CD8-positive, alpha-beta T cell (primary cell): ENCODE measurements at regions of chr1 and their contacts with region 1.

Region 1: GRCh38 chr1:229258031-229258756 is 12.7 kb upstream of the RAB4A start:
- DNase-seq: peak; percentile 24 to 82 (median 67)
- ATAC-seq: peak; percentile 25
- H3K4me3 ChIP-seq: no peak overlapping the region
- H3K4me3 Mint-ChIP-seq: peak overlapping the region; percentile 4
- H3K27ac ChIP-seq: peak overlapping the region in 1 of 2 experiments; percentile 33
- H3K27ac Mint-ChIP-seq: peak overlapping the region; percentile 80
- H3K4me1 ChIP-seq: peaks cover 25% of the 10 kb centered on the region
- H3K4me1 Mint-ChIP-seq: peaks cover 27% of the 10 kb centered on the region
- H3K27me3 ChIP-seq: no peaks in the 10 kb centered on the region
- H3K27me3 Mint-ChIP-seq: no peaks in the 10 kb centered on the region
- CTCF ChIP-seq: peak; percentile 93

Region 2: GRCh38 chr1:228664399-228664914 is 593.7 kb before region 1 on chr1:
- CTCF ChIA-PET with region 1: interaction called, 75 read pairs
- POLR2A ChIA-PET with region 1: interaction called, 5 read pairs
- intact Hi-C with region 1: loop called (anchors 1 kb)
- DNase-seq: peak; percentile 58 to 86 (median 79)
- ATAC-seq: peak; percentile 48
- H3K4me3 ChIP-seq: no peak overlapping the region
- H3K4me3 Mint-ChIP-seq: no peak overlapping the region
- H3K27ac ChIP-seq: no peak overlapping the region
- H3K27ac Mint-ChIP-seq: no peak overlapping the region
- H3K4me1 ChIP-seq: no peaks in the 10 kb centered on the region
- H3K4me1 Mint-ChIP-seq: peaks cover 3% of the 10 kb centered on the region
- H3K27me3 ChIP-seq: no peaks in the 10 kb centered on the region
- H3K27me3 Mint-ChIP-seq: no peaks in the 10 kb centered on the region
- CTCF ChIP-seq: peak; percentile 90

Region 3: GRCh38 chr1:229227298-229227919 is 30.8 kb before region 1 on chr1:
- CTCF ChIA-PET with region 1: interaction called, 103 read pairs
- POLR2A ChIA-PET with region 1: interaction called, 12 read pairs
- intact Hi-C with region 1: loop called (anchors 1 to 2 kb)
- DNase-seq: peak; percentile 68 to 92 (median 81)
- ATAC-seq: peak; percentile 75
- H3K4me3 ChIP-seq: no peak overlapping the region
- H3K4me3 Mint-ChIP-seq: no peak overlapping the region
- H3K27ac ChIP-seq: no peak overlapping the region
- H3K27ac Mint-ChIP-seq: no peak overlapping the region
- H3K4me1 ChIP-seq: no peaks in the 10 kb centered on the region
- H3K4me1 Mint-ChIP-seq: peaks cover 14% of the 10 kb centered on the region
- H3K27me3 ChIP-seq: no peaks in the 10 kb centered on the region
- H3K27me3 Mint-ChIP-seq: peaks cover 6% of the 10 kb centered on the region
- CTCF ChIP-seq: peak; percentile 94

Region 4: DNA sequence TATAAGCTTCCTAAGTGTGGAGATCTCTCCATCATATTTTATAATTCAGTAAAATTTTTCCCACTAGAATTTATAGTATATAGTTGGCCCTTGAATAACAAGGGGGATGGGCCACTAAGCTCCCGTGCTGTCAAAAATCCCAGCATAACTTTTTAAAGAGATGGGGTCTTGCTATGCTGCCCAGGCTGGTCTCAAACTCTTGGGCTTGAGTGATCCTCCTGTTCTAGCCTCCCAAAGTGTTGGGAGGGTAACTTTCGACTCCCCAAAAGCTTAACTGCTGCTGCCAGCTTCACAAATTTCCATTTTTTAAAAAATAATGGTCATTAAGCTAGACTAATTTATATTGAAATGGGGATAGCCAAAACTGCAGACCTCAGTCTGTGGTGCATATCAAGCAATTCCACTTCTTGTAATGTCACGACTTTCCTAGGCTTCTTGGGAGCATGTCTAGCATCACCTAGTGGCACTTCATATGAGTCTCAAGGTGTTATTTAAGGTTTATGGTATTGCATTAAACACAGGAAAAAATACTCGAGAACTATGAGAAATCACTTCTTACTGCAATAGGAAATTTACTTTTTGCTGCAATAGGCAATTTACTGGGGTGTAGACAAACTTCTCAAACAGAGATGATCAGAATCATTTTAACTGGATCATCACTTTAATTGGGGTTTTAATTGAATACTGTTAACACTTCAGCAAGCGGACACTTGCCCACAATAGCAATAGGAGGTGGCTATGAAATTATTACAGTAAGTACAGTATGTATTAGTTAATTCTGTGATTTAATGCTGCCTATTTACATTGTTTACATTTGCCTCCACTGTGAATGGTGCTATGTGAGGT is 195.0 kb after region 1 on chr1:
- CTCF ChIA-PET with region 1: interaction called, 17 read pairs
- POLR2A ChIA-PET with region 1: no interaction called
- intact Hi-C with region 1: loop called in 1 of 2 experiments (anchors 1 kb)
- DNase-seq: peak in 1 of 9 experiments; percentile 18
- ATAC-seq: no peak
- H3K4me3 ChIP-seq: no peak overlapping the region
- H3K4me3 Mint-ChIP-seq: no peak overlapping the region
- H3K27ac ChIP-seq: no peak overlapping the region
- H3K27ac Mint-ChIP-seq: no peak overlapping the region
- H3K4me1 ChIP-seq: no peaks in the 10 kb centered on the region
- H3K4me1 Mint-ChIP-seq: no peaks in the 10 kb centered on the region
- H3K27me3 ChIP-seq: no peaks in the 10 kb centered on the region
- H3K27me3 Mint-ChIP-seq: no peaks in the 10 kb centered on the region
- CTCF ChIP-seq: no peak

Region 5: DNA sequence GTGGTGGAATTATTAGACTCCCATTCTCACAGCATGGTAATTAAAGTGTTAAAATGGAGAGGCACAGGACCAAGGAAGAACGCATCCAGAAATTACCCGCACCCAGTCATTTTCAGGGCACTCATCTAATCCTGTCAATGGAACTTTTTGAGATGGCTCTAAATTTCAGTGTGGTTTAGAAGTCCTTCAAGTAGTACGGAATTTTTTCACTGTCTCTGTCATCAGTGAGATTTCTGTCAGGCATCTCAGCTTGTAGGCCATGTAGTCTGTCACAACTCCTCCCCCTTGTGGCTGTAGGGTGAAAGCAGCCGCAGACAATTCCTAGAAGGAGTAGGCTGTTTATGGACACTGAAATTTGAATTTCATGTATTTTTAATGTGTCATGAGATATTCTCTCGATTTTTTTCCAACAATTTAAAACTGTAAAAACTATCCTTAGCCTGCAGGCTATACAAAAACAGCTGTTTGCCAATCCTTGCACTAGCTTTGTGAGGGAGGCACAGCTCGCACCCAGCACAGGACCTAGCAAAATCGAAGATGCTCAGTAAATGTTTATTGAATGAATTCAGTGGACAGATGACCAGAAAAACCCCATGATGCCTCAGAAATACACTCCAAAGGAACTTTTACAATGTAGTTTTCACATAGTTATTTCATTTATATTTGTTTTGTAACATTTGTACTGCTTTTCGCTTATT is 256.5 kb after region 1 on chr1:
- CTCF ChIA-PET with region 1: interaction called, 38 read pairs
- POLR2A ChIA-PET with region 1: no interaction called
- intact Hi-C with region 1: loop called (anchors 1 to 10 kb)
- DNase-seq: peak; percentile 30 to 84 (median 66)
- ATAC-seq: peak; percentile 98
- H3K4me3 ChIP-seq: no peak overlapping the region
- H3K4me3 Mint-ChIP-seq: no peak overlapping the region
- H3K27ac ChIP-seq: no peak overlapping the region
- H3K27ac Mint-ChIP-seq: no peak overlapping the region
- H3K4me1 ChIP-seq: no peaks in the 10 kb centered on the region
- H3K4me1 Mint-ChIP-seq: peaks cover 5% of the 10 kb centered on the region
- H3K27me3 ChIP-seq: no peaks in the 10 kb centered on the region
- H3K27me3 Mint-ChIP-seq: no peaks in the 10 kb centered on the region
- CTCF ChIP-seq: peak; percentile 89